ENCODE measurements at regions of chr4 and their contacts with region 1.

Region 1: GRCh38 chr4:7815562-7815961 is 124.1 kb downstream of the AFAP1 start:
- DNase-seq: no peak
- H3K4me3 ChIP-seq: no peak overlapping the region
- H3K27ac ChIP-seq: no peak overlapping the region
- H3K4me1 ChIP-seq: no peaks in the 10 kb centered on the region
- H3K27me3 ChIP-seq: peaks cover 0 to 56% (median 5%) of the 10 kb centered on the region in 5 experiments

Region 2: DNA sequence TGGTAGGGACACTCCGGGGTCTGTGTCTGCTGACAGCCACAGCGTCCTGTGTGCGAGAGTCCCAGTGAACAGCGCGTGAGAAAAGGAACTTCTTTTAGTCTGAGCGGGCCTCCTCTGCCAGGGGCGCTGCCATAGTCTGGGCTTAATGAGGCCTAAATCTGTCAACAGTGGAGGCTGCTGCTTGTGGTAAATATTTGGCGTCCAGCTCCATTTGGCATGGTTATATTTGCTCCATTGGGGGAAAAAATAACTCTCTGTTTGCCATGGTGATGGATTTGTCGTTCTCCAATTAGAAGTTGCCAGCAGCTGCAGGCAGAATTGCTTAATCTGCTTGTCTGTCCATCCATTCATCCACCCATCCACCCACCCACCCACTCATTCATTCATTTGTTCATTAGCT is 309.4 kb before region 1 on chr4:
- CTCF ChIA-PET with region 1: no interaction called
- POLR2A ChIA-PET with region 1: no interaction called
- DNase-seq: no peak
- H3K4me3 ChIP-seq: no peak overlapping the region
- H3K27ac ChIP-seq: no peak overlapping the region
- H3K4me1 ChIP-seq: no peaks in the 10 kb centered on the region
- H3K27me3 ChIP-seq: peaks cover 0 to 44% (median 8%) of the 10 kb centered on the region in 5 experiments

Region 3: DNA sequence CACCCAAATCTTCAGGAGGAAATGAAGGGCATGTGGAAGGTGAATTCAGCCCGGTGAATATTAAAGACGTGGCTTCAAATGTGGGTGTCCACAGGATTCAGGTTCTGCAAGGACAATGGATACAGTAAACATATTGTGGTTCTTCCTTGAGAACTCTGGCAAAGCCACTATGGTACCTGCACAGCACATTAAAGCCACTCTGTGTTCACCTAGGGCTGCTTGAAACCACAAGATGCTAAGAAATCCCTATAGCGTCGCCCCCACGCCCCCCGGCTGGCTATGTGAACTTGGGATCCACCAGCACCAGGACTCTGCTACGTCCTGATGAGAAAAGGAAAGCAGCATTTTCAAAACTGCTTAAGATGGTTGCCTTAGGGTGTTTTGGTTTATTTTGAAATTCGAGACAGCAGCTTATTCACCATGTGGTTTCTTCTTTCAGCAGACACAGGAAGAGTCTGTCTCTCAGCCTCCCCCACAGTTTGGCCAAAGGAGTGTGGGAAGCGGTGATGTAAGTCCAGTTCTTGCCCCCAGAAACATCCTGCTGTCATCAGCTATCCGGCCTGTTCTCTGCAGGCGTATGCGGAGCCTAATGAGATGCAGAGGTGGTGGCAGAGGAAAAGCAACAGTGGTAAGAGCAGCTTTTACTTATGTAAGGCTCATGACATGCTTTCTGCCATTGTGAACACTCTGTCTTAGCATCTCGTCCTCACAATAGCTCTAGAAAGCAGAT is 12.6 kb after region 1 on chr4:
- CTCF ChIA-PET with region 1: interaction called, 12 read pairs
- POLR2A ChIA-PET with region 1: no interaction called
- DNase-seq: peak; percentile 76 to 94 (median 92)
- H3K4me3 ChIP-seq: peak overlapping the region in 2 of 7 experiments; percentile 21 to 31
- H3K27ac ChIP-seq: peak overlapping the region in 1 of 2 experiments; percentile 35
- H3K4me1 ChIP-seq: peaks cover 6 to 26% (median 14%) of the 10 kb centered on the region in 4 experiments
- H3K27me3 ChIP-seq: peaks cover 0 to 25% (median 5%) of the 10 kb centered on the region in 5 experiments

Region 4: GRCh38 chr4:7843831-7844593 is 28.4 kb after region 1 on chr4:
- CTCF ChIA-PET with region 1: interaction called, 28 read pairs
- POLR2A ChIA-PET with region 1: no interaction called
- DNase-seq: peak; percentile 60 to 73 (median 64)
- H3K4me3 ChIP-seq: no peak overlapping the region
- H3K27ac ChIP-seq: no peak overlapping the region
- H3K4me1 ChIP-seq: no peaks in the 10 kb centered on the region
- H3K27me3 ChIP-seq: peaks cover 0 to 46% (median 3%) of the 10 kb centered on the region in 5 experiments

Measured in common myeloid progenitor, CD34-positive (primary cell).